Prostate gland (tissue), 2 donors: ENCODE measurements at regions of chr1 and their contacts with region 1.

Region 1: DNA sequence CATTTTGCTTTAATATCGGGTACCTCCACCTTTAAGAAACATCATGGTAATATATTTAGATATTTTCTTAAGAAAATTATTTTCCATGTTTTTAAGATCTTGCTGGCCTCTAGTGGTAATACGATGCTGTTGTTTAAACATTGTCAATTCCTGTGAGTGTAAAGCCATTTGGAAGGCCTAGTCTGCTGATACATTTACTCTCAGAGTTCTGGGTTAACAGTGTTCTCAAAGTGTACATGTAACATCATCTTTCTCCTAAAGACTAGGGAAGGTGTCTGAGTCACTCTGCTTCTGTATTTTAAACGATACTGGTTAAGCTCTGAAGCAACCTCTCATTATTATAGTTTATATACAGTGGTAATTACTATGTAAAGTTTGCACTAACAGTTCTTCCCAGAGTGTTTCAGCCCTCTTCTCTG is 189.1 kb downstream of the RASAL2 start:
- DNase-seq: no peak
- H3K4me3 ChIP-seq: no peak overlapping the region
- H3K27ac ChIP-seq: no peak overlapping the region
- H3K4me1 ChIP-seq: no peaks in the 10 kb centered on the region
- H3K27me3 ChIP-seq: no peaks in the 10 kb centered on the region
- CTCF ChIP-seq: peak in 3 of 4 experiments; percentile 30 to 53 (median 46)
- POLR2A ChIP-seq: no peak

Region 2: DNA sequence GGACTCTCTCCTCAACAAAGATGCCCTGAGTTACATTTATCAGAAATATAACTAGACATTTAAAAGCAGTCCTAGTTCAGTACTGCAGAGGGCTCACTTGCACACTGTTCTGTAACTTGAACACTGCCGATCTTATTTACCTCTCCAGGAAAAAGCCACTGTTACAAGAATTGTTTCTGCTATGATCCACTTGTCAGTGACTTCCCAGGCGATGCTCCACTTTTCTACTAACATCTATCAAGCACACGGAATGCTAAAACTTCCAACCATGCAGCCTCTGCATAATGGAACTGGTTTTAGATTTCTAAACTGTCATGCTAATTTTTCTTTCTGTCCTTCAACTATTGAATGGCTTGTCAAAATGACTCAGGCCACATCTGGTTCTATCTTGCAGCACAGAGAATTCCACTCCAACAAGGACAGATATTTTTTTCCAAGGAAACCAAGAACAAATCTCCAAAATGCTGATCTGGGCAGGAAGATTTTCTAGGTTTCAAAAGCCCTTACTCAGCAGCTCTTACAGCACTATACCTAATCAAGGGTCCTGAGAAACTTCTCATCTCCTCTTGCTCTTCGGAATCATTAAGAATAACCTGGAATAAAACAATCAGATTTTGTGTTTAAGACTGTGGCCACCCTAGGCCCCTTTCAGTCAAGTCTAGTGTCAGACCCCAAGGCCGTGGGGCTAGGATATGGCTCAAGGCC is 323.0 kb before region 1 on chr1:
- intact Hi-C with region 1: loop called (anchors 10 kb)
- DNase-seq: no peak
- H3K4me3 ChIP-seq: no peak overlapping the region
- H3K27ac ChIP-seq: no peak overlapping the region
- H3K4me1 ChIP-seq: no peaks in the 10 kb centered on the region
- H3K27me3 ChIP-seq: no peaks in the 10 kb centered on the region
- CTCF ChIP-seq: no peak
- POLR2A ChIP-seq: no peak

Region 3: GRCh38 chr1:178031856-178032320 is 251.1 kb before region 1 on chr1:
- intact Hi-C with region 1: loop called (anchors 5 kb)
- DNase-seq: peak; percentile 83
- H3K4me3 ChIP-seq: no peak overlapping the region
- H3K27ac ChIP-seq: peak overlapping the region in 1 of 2 donors; percentile 25
- H3K4me1 ChIP-seq: peaks cover 8% of the 10 kb centered on the region
- H3K27me3 ChIP-seq: no peaks in the 10 kb centered on the region
- CTCF ChIP-seq: peak; percentile 60 to 86 (median 76)
- POLR2A ChIP-seq: no peak

Region 4: DNA sequence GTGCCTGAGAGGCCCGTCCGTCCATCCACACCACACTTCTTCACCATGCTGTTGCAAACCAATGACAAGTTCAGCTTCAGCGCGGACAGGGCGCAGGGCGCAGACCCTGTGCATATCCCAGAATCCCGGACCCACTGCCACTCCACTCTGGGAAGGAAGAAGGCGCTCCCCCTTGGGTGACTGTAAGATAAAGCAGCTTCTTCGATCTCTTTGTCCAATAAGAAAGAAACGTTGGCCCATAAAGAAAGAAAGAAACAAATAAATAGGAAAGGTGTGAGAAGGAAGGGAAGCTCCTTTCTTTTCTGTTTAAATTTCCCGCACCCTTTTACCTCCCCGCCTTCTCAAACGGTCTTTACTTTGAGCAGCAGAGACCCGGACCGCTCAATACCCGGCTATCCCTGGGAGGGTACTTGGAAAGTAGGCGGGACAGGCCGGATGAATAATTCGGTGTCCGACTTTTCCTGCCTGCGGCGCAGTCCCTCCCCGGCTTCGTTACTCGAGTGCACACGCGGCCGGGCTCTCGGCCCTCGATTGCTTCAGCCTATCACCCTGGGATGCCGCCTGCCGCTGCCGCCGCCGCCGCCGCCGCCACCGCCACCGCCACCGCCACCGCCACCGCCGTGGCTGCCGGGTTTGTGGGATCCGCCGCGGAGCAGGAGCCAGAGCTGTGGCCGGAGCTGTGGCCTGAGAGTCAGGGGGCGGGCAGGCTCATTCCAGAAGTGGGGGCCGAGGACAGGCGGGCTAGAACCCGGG is 189.6 kb before region 1 on chr1:
- intact Hi-C with region 1: loop called (anchors 10 kb)
- DNase-seq: peak; percentile 87
- H3K4me3 ChIP-seq: peak overlapping the region; percentile 84 to 95
- H3K27ac ChIP-seq: peak overlapping the region; percentile 85 to 88
- H3K4me1 ChIP-seq: no peaks in the 10 kb centered on the region
- H3K27me3 ChIP-seq: no peaks in the 10 kb centered on the region
- CTCF ChIP-seq: peak in 1 of 4 experiments; percentile 7
- POLR2A ChIP-seq: no peak

Region 5: GRCh38 chr1:178379807-178380206 is 96.8 kb after region 1 on chr1:
- intact Hi-C with region 1: no loop called
- DNase-seq: no peak
- H3K4me3 ChIP-seq: no peak overlapping the region
- H3K27ac ChIP-seq: no peak overlapping the region
- H3K4me1 ChIP-seq: no peaks in the 10 kb centered on the region
- H3K27me3 ChIP-seq: no peaks in the 10 kb centered on the region
- CTCF ChIP-seq: no peak
- POLR2A ChIP-seq: no peak